ENCODE measurements at regions of chr10 and their contacts with region 1.

Region 1: DNA sequence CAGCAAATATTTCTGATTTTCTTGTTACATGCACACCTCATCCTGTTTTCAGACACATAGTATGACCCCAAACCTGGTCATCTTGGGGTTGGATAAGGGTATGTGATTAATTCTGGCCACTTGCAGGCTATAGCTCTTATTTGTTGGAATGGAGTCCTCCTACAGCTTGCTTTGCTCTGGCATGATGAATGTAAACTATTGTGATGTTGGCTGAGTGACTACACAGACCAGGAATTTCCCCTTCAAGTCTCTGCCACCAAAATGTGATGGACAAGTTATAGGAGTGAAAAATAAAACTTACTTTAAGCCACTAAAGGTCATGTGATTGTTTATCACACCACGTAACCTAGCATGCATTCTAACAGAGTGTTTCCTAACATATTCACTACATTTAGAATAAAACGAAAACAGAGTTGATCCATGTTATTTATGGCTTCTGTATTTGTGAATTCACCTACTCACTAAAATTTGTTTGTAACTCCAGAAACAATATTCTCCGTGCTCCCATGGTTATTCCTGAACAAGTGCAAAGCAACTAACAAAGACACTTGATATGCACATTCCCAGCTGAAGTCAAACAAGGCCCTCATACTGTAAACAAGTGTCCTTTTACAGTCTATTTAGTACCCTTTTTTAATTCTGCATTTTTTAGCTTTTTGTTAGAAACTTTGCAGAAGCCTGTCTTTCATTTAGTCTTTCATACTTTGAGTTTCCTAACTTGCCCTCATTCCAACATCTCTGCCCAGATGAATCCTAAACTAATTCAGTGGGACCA is 599.2 kb upstream of the PCDH15 start:
- DNase-seq: no peak
- ATAC-seq: no peak
- H3K4me3 ChIP-seq: no peak overlapping the region
- H3K4me3 Mint-ChIP-seq: no peak overlapping the region
- H3K27ac ChIP-seq: no peak overlapping the region
- H3K27ac Mint-ChIP-seq: no peak overlapping the region
- H3K4me1 ChIP-seq: no peaks in the 10 kb centered on the region
- H3K4me1 Mint-ChIP-seq: no peaks in the 10 kb centered on the region
- H3K27me3 ChIP-seq: no peaks in the 10 kb centered on the region
- H3K27me3 Mint-ChIP-seq: no peaks in the 10 kb centered on the region

Region 2: DNA sequence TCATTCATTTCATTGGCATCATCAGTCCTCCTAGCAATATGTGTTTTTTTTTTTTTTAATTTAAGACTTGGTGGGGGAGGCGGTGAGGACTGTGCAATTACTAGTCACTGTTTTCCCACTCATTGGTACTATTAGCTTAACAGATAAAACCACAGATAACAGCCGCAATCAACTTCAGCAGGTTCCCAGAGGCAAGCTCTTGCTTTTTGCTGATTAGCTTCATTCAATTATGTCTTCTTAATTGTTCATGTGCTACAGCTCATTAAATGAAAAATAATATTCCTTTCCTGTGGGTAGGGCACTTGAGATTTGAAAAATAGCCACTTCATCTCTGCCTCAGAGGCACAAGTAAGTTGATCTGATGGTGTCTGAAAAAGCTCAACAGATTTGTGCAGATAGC is 814.7 kb before region 1 on chr10:
- CTCF ChIA-PET with region 1: no interaction called
- POLR2A ChIA-PET with region 1: no interaction called
- DNase-seq: no peak
- ATAC-seq: no peak
- H3K4me3 ChIP-seq: no peak overlapping the region
- H3K4me3 Mint-ChIP-seq: no peak overlapping the region
- H3K27ac ChIP-seq: no peak overlapping the region
- H3K27ac Mint-ChIP-seq: no peak overlapping the region
- H3K4me1 ChIP-seq: no peaks in the 10 kb centered on the region
- H3K4me1 Mint-ChIP-seq: no peaks in the 10 kb centered on the region
- H3K27me3 ChIP-seq: no peaks in the 10 kb centered on the region
- H3K27me3 Mint-ChIP-seq: no peaks in the 10 kb centered on the region

Region 3: DNA sequence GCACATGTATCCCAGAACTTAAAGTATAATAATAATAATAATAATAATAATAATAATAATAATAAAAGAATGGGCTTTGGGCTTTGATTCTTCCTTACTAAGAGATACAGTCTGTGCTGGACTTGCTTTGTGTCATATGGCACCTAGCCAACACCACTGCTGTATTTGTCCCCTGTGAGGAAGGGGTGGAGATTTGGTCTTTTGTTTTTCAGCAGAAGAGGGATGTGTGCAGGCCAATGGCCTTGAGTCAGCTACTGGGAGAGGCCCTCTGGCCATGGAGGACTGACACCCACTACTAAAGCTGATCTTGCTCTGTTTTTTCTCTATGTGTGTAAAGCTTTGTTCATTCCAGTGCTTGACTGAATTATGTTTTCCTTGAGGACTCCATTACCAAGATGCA is 26.2 kb before region 1 on chr10:
- CTCF ChIA-PET with region 1: interaction called in 1 of 2 experiments, 10 read pairs
- POLR2A ChIA-PET with region 1: no interaction called
- DNase-seq: no peak
- ATAC-seq: no peak
- H3K4me3 ChIP-seq: no peak overlapping the region
- H3K4me3 Mint-ChIP-seq: no peak overlapping the region
- H3K27ac ChIP-seq: no peak overlapping the region
- H3K27ac Mint-ChIP-seq: no peak overlapping the region
- H3K4me1 ChIP-seq: no peaks in the 10 kb centered on the region
- H3K4me1 Mint-ChIP-seq: no peaks in the 10 kb centered on the region
- H3K27me3 ChIP-seq: no peaks in the 10 kb centered on the region
- H3K27me3 Mint-ChIP-seq: no peaks in the 10 kb centered on the region

Region 4: DNA sequence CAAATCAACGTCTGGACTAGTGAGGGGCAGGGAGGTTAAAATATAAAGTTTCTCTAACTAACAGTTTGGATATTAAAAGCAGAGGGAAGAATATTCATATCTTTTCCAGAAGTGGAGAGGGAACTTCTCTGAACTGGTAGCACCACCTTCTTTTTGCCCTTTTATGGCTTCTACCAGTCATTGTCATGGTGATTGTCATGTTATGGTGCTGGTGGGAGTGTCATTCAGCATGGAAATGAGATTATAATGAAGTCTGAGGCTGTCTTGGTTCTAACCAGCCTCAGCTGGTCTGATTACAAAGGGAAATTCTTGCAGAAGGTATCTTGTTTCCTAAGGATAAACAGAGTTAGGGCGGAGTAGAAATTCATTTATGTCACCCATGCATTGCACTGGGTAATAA is 437.0 kb after region 1 on chr10:
- CTCF ChIA-PET with region 1: no interaction called
- POLR2A ChIA-PET with region 1: no interaction called
- DNase-seq: no peak
- ATAC-seq: no peak
- H3K4me3 ChIP-seq: no peak overlapping the region
- H3K4me3 Mint-ChIP-seq: no peak overlapping the region
- H3K27ac ChIP-seq: no peak overlapping the region
- H3K27ac Mint-ChIP-seq: no peak overlapping the region
- H3K4me1 ChIP-seq: no peaks in the 10 kb centered on the region
- H3K4me1 Mint-ChIP-seq: no peaks in the 10 kb centered on the region
- H3K27me3 ChIP-seq: no peaks in the 10 kb centered on the region
- H3K27me3 Mint-ChIP-seq: no peaks in the 10 kb centered on the region